PC-9 (cell line): ENCODE measurements at regions of chr22 and their contacts with region 1.

Region 1: DNA sequence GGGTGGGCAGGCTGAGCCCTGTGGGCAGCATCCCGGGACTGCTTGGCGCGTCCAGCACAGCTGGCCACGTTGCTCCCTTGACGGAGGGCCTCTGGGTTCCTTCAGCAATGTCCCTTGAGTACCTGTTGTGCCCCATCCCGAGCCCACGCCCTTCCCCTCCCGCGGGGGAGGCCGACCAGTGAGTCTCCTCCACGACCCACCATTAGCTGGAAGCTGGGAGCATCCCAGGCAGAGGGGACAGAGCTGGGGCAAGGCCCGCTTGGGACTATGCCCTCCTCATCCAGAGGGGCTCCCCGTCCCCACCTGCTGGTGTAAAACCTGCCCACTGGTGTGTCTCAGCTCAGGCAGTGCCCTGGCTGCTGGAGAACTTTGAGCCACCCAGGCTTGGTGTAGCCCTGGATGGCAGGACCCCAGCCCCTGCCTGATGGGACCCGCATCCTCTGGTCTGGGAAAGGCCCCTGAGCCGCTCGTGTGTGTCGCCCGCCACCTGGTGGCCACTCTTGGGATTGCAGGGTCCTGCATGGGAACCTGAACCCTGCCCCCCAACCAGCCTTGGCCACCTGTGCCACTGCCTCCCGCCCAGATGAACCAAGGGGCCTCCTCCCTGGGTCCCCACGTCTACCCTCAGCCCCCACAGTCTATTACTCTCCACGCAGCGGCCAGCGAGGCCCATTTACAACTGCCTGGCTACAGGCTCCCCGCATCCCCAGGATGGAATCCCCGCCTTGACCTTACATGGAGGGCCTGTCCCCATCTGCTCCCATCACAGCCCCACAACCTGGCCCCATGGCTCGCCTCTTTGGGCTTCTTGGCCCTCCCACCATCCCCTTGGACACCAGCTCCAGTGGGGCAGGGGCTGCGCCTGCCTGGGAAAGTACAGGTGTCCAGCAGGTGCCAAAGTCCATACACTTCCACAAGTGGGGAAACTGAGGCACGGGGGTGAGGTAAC is 16.6 kb upstream of the ARHGAP8 start:
- DNase-seq: peak; percentile 48 to 81
- H3K4me3 ChIP-seq: no peak overlapping the region
- H3K27ac ChIP-seq: no peak overlapping the region
- H3K4me1 ChIP-seq: peaks cover 25% of the 10 kb centered on the region
- H3K27me3 ChIP-seq: no peaks in the 10 kb centered on the region
- CTCF ChIP-seq: peak; percentile 99

Region 2: DNA sequence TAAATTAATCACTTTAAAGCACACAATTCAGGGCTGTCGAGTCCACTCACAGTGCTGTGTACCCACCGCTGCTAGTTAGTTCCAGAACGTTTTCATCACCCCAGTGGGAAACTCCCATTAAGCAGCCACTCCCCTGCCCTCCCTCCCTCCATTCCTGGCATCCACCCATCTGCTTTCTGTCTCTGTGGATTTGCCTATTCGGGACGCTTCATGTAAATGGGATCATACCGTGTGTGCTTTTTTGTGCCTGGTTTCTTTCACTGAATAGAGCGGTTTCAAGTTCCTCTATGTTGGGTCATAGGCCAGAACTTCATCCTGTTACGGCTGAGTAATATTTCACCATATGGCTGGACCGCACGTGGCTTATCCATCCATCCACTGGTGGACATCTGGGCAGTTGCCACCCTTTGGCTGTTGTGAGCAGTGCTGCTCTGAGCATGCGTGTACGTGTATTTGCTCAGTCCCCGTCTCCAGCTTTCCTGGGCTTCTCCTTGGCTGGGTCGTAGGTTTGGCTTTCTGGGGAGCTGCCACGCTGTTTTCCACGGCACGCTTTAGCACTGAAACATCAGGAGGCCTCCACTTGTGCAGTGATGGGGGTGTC is 46.6 kb after region 1 on chr22:
- CTCF ChIA-PET with region 1: no interaction called
- POLR2A ChIA-PET with region 1: no interaction called
- intact Hi-C with region 1: loop called (anchors 5 kb)
- DNase-seq: no peak
- H3K4me3 ChIP-seq: no peak overlapping the region
- H3K27ac ChIP-seq: no peak overlapping the region
- H3K4me1 ChIP-seq: no peaks in the 10 kb centered on the region
- H3K27me3 ChIP-seq: no peaks in the 10 kb centered on the region
- CTCF ChIP-seq: no peak